MCF 10A (cell line): ENCODE measurements at regions of chr14 and their contacts with region 1.

Region 1: DNA sequence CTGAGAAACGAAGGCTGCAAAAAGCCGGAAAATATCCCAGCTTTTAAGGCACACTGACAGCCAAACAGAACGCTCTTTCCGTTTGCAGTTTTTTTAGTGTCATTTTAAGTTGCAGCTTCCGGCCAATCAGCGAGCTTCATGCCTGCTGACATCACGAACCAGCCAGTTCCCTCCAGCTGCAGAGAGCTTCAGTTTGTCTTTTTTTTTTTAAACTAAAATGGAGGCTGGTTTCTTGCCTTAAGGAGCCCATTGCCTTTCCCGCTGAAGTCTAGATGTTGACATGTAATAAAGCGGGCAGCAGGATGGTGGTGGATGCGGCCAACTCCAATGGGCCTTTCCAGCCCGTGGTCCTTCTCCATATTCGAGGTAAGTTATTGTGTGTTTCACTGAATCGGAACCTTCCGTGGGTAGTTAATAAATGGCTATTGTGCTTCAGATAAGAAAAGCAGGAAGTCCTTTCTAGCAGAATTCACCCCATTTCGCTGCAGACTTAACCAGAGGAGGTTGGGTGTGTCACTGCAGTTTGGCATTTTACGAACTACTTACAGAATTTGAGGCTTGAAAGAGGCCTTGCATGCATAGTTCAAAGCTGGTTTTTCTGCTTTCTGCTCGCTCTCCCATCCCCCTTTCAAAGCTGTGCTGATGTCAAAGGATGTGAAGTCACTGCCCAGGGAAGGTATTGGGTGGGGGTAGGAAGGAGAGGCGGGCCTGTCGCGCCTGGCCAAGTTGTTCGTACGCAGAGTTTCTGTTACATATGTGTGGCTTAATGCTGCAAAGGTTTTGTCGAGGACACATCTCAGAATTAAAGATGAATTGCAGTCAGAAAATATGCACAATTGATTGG is 48.4 kb downstream of the PPP2R5C start:
- DNase-seq: peak; percentile 92
- H3K4me3 Mint-ChIP-seq: peak overlapping the region; percentile 96
- H3K27ac Mint-ChIP-seq: peak overlapping the region; percentile 98
- H3K4me1 Mint-ChIP-seq: peaks cover 19% of the 10 kb centered on the region
- H3K27me3 Mint-ChIP-seq: no peaks in the 10 kb centered on the region
- CTCF ChIP-seq: no peak

Region 2: GRCh38 chr14:101731187-101732080 is 78.5 kb before region 1 on chr14:
- CTCF ChIA-PET with region 1: interaction called, 4 read pairs
- POLR2A ChIA-PET with region 1: interaction called, 29 read pairs
- intact Hi-C with region 1: no loop called
- DNase-seq: peak; percentile 98
- H3K4me3 Mint-ChIP-seq: peak overlapping the region; percentile 71
- H3K27ac Mint-ChIP-seq: peak overlapping the region; percentile 96
- H3K4me1 Mint-ChIP-seq: peaks cover 14% of the 10 kb centered on the region
- H3K27me3 Mint-ChIP-seq: no peaks in the 10 kb centered on the region
- CTCF ChIP-seq: no peak

Region 3: DNA sequence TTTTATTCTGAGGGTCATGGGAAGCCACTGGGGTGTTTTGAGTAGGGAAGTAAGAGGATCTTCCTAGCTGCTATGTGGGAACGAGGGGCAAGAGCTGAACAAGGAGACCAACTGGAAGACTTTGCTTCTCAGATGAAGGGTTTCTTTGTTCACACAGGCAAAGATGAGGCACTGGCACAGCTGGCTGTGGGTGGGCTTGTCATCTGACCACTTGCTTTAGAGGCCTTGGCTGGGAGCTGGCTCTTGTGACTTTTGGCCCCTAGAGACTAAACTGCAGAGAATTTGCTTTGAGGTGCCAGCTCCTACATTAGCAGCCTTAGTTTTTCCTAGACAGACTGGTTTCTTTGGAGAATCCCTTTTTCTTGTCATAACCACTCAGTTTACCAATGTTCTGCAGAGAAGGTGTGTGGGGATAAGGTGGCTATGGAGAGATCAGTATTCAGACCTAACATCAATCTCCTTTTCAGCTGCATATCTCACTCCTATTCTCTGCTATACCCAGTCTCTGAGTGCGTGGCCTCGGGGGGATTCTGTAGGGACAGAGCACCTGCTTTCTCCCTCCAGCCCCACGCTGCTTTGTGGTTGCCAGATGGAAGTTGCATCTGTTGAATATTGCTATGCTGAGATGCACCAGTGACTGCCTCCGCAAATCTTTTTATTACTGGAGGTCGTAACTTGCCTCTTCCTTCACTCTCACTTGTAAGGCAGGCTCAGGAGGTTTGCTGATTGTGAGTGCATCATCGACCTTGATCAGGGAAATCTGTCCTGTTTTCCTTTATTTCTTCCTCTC is 35.7 kb before region 1 on chr14:
- CTCF ChIA-PET with region 1: interaction called, 10 read pairs
- POLR2A ChIA-PET with region 1: interaction called, 24 read pairs
- intact Hi-C with region 1: loop called (anchors 2 kb)
- DNase-seq: no peak
- H3K4me3 Mint-ChIP-seq: no peak overlapping the region
- H3K27ac Mint-ChIP-seq: no peak overlapping the region
- H3K4me1 Mint-ChIP-seq: peaks cover 14% of the 10 kb centered on the region
- H3K27me3 Mint-ChIP-seq: no peaks in the 10 kb centered on the region
- CTCF ChIP-seq: no peak

Region 4: DNA sequence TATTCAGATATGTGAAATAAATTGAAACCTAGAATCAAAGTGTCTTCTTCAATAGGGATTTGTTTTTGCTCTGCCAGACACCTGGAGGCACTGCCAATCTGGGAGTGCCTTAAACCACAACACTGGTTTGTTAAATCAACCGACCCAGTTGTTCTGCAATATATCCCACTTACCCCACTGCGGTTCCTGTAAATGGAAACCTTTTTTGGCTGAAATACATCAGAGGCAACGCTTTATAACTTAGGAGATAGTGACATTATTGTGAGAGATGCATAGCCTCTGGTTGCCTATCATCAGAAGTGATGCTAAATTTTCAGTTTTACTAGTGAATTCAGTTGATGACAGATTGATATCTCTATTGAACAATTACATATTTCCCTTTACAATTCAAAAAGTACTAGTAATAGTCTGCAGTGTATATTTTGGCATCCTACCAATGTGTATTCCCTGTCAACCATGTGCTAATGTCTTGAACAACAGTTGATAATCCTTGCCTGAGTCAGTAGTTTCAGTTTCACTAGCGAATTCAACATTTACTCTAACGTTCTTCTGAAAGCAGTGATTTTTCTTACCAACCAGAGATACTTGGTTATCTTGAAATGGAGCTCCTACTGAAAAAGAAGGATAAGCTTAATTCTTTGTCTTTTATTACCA is 17.8 kb before region 1 on chr14:
- CTCF ChIA-PET with region 1: interaction called, 6 read pairs
- POLR2A ChIA-PET with region 1: interaction called, 61 read pairs
- intact Hi-C with region 1: no loop called
- DNase-seq: peak; percentile 63
- H3K4me3 Mint-ChIP-seq: peak overlapping the region; percentile 74
- H3K27ac Mint-ChIP-seq: peak overlapping the region; percentile 86
- H3K4me1 Mint-ChIP-seq: peaks cover 11% of the 10 kb centered on the region
- H3K27me3 Mint-ChIP-seq: no peaks in the 10 kb centered on the region
- CTCF ChIP-seq: no peak

Region 5: GRCh38 chr14:101947906-101948665 is 138.2 kb after region 1 on chr14:
- CTCF ChIA-PET with region 1: no interaction called
- POLR2A ChIA-PET with region 1: interaction called, 36 read pairs
- intact Hi-C with region 1: no loop called
- DNase-seq: peak; percentile 100
- H3K4me3 Mint-ChIP-seq: peak overlapping the region; percentile 94
- H3K27ac Mint-ChIP-seq: peak overlapping the region; percentile 100
- H3K4me1 Mint-ChIP-seq: peaks cover 9% of the 10 kb centered on the region
- H3K27me3 Mint-ChIP-seq: peaks cover 2% of the 10 kb centered on the region
- CTCF ChIP-seq: no peak

Region 6: DNA sequence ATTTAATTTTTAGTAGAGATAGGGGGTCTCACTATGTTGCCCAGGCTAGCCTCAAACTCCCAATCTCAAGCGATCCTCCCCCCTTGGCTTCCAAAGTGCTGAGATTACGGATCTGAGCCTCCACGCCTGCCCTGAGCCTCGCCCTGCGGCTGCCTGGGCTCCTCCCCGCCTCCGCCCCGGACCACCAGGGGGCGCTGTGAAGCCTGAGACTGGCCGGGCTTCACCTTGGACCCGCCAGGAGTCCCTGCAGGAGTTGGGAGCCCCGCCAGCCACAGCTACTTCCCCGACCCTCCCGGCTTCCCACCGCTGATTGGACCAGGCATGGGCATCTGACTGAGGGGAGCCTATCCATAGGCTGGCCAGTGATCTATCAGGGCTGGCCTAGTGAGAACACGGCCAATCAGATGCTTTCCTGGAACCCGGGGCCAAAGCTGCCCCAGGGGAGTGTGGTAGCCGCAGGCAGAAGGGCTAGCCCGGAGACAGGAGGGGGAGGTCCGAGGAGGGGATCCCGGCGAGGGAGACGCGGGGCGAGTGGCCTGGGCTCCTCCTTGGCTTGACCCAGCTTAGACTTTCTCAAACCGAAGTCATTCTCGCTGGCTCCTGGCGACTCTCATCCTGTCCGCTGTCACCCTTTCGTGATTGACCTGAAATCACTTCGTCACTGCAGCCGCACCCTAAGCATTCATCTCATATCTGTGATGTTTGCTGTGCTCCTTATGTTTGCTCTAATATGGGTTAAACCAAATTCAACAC is 714.7 kb after region 1 on chr14:
- CTCF ChIA-PET with region 1: no interaction called
- POLR2A ChIA-PET with region 1: no interaction called
- intact Hi-C with region 1: no loop called
- DNase-seq: peak; percentile 99
- H3K4me3 Mint-ChIP-seq: peak overlapping the region; percentile 95
- H3K27ac Mint-ChIP-seq: peak overlapping the region; percentile 97
- H3K4me1 Mint-ChIP-seq: peaks cover 25% of the 10 kb centered on the region
- H3K27me3 Mint-ChIP-seq: no peaks in the 10 kb centered on the region
- CTCF ChIP-seq: peak; percentile 92